ENCODE measurements at regions of chr7 and their contacts with region 1.

Region 1: DNA sequence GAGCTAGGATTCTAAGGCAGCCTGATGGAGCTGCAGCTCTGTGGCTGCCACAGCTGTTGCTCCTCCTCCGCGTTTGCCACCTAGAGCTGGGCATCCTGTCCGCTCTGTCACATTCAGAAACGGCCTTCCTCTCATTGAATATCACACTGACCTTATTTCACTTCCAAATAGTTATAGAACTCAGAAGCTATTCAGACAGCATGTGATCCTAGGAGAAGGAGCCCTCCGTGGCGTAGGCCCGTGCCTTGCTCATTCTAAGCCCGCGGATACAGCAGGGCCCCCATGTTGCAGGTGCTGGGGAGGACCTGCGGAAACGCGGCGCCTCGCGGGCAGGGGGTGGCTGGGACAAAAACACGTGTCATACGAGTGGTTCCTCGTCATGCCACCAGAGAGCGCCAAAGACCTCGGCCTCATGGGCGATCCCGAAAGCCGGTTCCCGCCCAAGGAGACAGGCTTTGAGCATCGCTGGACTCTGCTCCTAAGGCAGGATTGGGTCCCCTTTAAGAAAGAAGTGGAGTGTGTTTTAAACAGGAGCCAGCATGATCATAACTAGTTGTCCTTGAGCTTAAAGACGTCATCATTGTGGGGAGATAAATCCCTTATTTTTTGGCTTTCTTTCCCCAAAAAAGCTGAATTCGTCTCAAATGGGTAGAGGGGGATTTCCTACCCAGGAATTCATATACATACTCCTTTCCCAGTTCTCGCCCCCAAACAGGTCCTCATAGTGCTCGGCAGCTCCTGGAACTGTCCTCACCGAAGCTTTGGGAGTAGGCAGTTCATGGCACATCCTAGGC is 17.9 kb upstream of the FIGNL1 start:
- DNase-seq: peak; percentile 86 to 94
- ATAC-seq: peak; percentile 91
- H3K4me3 ChIP-seq: no peak overlapping the region
- H3K27ac ChIP-seq: no peak overlapping the region
- H3K4me1 ChIP-seq: no peaks in the 10 kb centered on the region
- H3K27me3 ChIP-seq: no peaks in the 10 kb centered on the region

Region 2: DNA sequence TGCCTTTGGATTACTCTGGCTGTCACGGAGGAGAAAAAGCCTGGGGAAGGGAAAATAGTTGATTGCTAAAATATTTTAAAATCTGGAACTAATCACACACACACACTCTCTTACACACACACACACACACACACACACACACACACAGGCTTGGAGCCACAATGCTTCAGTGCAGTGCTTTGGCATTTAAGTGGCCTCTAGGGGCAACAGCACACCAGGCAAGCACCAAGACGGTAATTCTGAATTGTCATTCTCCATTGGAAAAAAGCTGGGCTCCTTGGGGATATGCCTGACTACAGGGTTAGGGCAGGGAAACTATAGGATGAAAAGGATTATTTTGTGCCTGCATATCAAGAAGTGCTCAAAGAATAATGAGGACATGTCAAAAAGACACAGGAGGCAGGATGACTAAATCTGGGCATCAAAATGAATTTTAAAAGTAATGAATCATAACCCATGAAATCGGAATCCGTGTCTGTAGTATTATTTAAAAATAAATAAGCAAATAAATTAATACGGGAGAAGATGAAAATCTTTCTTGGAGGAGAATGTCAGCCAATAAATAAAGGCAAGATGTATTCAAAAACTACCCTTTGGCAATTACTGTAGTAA is 127.6 kb after region 1 on chr7:
- intact Hi-C with region 1: loop called in 1 of 2 experiments (anchors 10 kb)
- DNase-seq: no peak
- ATAC-seq: peak; percentile 65
- H3K4me3 ChIP-seq: no peak overlapping the region
- H3K27ac ChIP-seq: no peak overlapping the region
- H3K4me1 ChIP-seq: no peaks in the 10 kb centered on the region
- H3K27me3 ChIP-seq: no peaks in the 10 kb centered on the region

Region 3: DNA sequence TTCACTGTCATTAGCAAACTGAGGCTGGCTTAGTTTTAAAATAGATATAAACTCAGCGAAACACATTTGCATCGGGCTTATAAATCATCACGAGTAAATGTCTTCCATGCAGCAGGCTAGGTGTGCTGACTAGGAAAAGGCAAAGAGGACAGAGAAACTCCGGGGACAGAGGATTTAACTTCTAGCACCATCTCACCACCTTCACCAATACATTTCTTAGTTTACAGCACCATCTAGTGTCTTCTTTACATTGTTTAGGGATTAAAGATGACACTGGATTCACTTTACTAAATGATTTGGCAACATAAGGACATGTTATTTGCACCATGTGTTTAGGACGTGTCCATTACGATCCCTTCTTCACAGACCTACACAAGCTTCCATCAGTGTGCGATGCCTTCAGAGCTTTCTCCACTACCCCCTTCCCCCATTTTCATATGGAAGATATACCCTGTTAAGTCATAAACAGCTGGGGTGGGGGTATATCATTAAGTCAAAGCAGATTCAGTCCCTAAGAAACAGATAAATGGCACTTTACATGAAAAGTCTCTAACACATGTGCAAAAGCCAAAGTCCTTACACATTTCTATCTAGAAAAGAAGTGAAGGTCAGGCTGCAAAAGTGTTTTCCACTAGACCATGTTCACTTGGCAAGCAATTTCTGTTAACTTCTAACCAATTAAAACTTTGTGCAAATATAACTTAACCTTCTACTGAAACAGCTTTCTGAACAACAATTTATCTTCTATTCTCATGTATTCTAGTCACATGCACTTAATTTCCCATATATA is 211.4 kb after region 1 on chr7:
- intact Hi-C with region 1: loop called (anchors 5 to 10 kb)
- DNase-seq: no peak
- ATAC-seq: no peak
- H3K4me3 ChIP-seq: no peak overlapping the region
- H3K27ac ChIP-seq: no peak overlapping the region
- H3K4me1 ChIP-seq: peaks cover 0 to 6% of the 10 kb centered on the region in 2 donors
- H3K27me3 ChIP-seq: no peaks in the 10 kb centered on the region

Region 4: GRCh38 chr7:51067757-51068156 is 599.7 kb after region 1 on chr7:
- intact Hi-C with region 1: loop called (anchors 2 to 10 kb)
- DNase-seq: no peak
- ATAC-seq: peak; percentile 40
- H3K4me3 ChIP-seq: no peak overlapping the region
- H3K27ac ChIP-seq: no peak overlapping the region
- H3K4me1 ChIP-seq: no peaks in the 10 kb centered on the region
- H3K27me3 ChIP-seq: no peaks in the 10 kb centered on the region

Region 5: GRCh38 chr7:51141451-51142003 is 673.5 kb after region 1 on chr7:
- intact Hi-C with region 1: loop called (anchors 2 to 5 kb)
- DNase-seq: no peak
- ATAC-seq: no peak
- H3K4me3 ChIP-seq: no peak overlapping the region
- H3K27ac ChIP-seq: no peak overlapping the region
- H3K4me1 ChIP-seq: no peaks in the 10 kb centered on the region
- H3K27me3 ChIP-seq: no peaks in the 10 kb centered on the region

Region 6: DNA sequence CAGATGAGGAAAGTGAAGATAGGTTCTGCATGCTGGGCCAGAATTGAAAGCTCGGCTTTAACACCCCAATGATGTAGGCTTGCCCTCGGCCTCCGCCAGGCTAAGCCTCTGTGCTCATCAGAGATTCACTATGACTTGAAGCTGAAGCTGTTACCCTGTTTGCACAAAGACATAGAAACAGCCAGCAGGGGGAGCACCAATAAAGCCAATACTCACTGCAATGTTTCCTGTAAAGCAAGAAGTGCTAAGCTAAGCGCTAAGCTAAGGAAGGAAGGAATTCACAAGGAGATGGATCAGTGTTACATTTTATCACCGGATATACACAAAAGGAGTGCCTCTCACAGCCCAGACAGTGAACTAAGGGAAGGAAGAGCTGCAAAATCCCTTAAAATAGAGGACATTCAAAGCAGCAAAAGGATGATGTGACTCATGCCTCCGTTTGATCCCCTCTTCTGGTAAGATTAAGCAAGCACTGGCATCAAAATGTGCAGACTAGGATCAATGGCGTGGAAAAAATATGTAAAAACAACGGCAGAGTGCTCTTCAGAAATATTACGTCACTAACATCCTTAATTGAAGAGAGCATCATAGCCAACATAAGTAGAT is 694.8 kb after region 1 on chr7:
- intact Hi-C with region 1: loop called (anchors 1 to 5 kb)
- DNase-seq: peak in 1 of 2 donors; percentile 68
- ATAC-seq: peak; percentile 69
- H3K4me3 ChIP-seq: no peak overlapping the region
- H3K27ac ChIP-seq: no peak overlapping the region
- H3K4me1 ChIP-seq: no peaks in the 10 kb centered on the region
- H3K27me3 ChIP-seq: no peaks in the 10 kb centered on the region

Measured in aorta (tissue), 5 donors.